ENCODE measurements at regions of chr22 and their contacts with region 1.

Region 1: DNA sequence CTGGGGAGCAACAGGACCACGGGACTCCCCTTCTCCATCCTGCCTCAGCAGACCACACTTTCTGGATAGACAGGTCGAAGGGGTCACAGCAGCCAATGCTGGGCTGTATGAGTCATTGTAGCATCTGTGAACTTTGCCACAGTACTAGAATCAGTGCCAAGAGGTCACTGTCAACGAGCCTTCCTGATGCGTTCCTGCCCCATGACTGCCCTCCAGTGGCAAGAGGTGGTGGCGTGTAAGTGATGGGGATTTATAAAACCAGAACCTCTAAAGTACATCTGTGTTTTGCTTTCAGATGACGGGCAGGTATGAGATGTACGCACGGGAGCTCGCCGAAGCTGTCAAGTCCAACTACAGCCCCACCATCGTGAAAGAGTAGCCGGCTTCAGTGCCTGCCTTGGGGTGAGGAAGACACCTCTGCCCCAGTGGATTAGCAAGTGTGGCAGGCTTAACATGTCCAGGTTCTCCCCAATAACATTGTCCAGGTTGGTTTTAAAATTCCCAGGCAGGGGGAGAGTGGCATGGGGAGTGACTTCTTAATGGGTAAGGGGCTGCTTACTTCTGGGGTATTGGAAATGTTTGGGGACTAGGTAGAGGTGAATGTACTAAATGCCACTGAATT is 29.4 kb downstream of the GUCD1 start:
- DNase-seq: peak; percentile 76 to 89
- ATAC-seq: peak; percentile 88
- H3K4me3 ChIP-seq: no peak overlapping the region
- H3K27ac ChIP-seq: no peak overlapping the region
- H3K4me1 ChIP-seq: no peaks in the 10 kb centered on the region
- H3K27me3 ChIP-seq: no peaks in the 10 kb centered on the region

Region 2: GRCh38 chr22:24325105-24325757 is 200.3 kb before region 1 on chr22:
- intact Hi-C with region 1: loop called (anchors 5 to 10 kb)
- DNase-seq: no peak
- ATAC-seq: peak; percentile 78
- H3K4me3 ChIP-seq: no peak overlapping the region
- H3K27ac ChIP-seq: no peak overlapping the region
- H3K4me1 ChIP-seq: no peaks in the 10 kb centered on the region
- H3K27me3 ChIP-seq: no peaks in the 10 kb centered on the region

Region 3: DNA sequence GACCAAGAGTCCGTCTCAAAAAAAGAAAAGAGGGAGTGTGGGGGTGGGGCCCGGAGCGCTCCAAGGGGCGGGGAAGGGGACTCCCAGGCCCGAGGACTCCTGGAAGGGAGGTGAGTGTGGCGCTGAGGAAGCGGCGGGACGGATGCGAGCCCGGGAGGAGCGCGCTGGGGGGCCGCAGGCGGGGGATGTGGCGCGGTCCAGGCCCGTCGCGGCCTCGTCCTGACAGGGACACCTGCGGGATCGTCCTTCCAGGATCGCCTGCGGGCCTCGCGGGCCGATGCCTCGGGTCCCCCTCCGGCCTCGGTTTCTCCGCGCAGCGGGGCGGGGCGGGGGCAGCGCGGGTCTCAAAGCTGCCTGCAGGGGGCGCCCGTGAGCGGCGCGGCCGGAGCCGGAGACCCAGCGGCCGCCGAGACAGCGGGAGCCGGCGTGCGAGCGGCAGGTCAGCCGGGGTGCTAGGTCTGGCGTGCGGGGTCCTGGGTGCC is 102.0 kb before region 1 on chr22:
- intact Hi-C with region 1: loop called (anchors 5 kb)
- DNase-seq: peak; percentile 76 to 91
- ATAC-seq: peak; percentile 75
- H3K4me3 ChIP-seq: peak overlapping the region in 1 of 2 donors; percentile 17
- H3K27ac ChIP-seq: no peak overlapping the region
- H3K4me1 ChIP-seq: no peaks in the 10 kb centered on the region
- H3K27me3 ChIP-seq: no peaks in the 10 kb centered on the region

Measured in aorta (tissue), 5 donors.